Breast epithelium (tissue), 4 donors: ENCODE measurements at regions of chr10 and their contacts with region 1.

Region 1: GRCh38 chr10:78378192-78378591 is 344.5 kb downstream of the RPS24 start:
- DNase-seq: no peak
- H3K4me3 ChIP-seq: no peak overlapping the region
- H3K27ac ChIP-seq: no peak overlapping the region
- H3K4me1 ChIP-seq: peaks cover 0 to 3% of the 10 kb centered on the region in 2 donors
- H3K27me3 ChIP-seq: no peaks in the 10 kb centered on the region
- CTCF ChIP-seq: no peak
- POLR2A ChIP-seq: no peak

Region 2: GRCh38 chr10:78443900-78444571 is 65.8 kb after region 1 on chr10:
- intact Hi-C with region 1: loop called (anchors 2 kb)
- DNase-seq: no peak
- H3K4me3 ChIP-seq: no peak overlapping the region
- H3K27ac ChIP-seq: no peak overlapping the region
- H3K4me1 ChIP-seq: no peaks in the 10 kb centered on the region
- H3K27me3 ChIP-seq: no peaks in the 10 kb centered on the region
- CTCF ChIP-seq: no peak
- POLR2A ChIP-seq: no peak

Region 3: GRCh38 chr10:78552261-78552811 is 174.1 kb after region 1 on chr10:
- intact Hi-C with region 1: no loop called
- DNase-seq: peak in 1 of 2 donors; percentile 47
- H3K4me3 ChIP-seq: no peak overlapping the region
- H3K27ac ChIP-seq: peak overlapping the region in 1 of 2 donors; percentile 64
- H3K4me1 ChIP-seq: no peaks in the 10 kb centered on the region
- H3K27me3 ChIP-seq: no peaks in the 10 kb centered on the region
- CTCF ChIP-seq: no peak
- POLR2A ChIP-seq: no peak